K562 (cell line): ENCODE measurements at regions of chr15 and their contacts with region 1.

Region 1: DNA sequence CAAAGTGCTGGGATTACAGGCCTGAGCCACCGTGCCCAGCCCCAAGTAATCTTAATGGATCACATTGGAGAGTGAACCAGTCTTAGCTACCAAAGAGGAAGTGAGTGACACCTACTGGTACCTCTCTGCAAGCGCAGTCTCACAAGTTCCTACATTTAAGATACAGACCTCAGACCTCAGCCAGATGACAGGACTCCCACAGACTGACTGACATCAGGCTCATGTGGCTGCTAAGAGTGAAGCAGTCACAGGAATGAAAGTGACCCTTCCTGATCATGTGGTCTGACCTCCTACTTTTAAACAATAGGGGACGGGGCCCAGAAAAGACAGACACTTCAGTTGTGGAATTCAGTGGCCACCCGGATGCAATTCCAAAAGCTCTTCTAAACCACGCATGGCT is 36.3 kb upstream of the GNB5 start:
- DNase-seq: peak; percentile 63 to 79 (median 68)
- ATAC-seq: peak; percentile 98
- H3K4me3 ChIP-seq: no peak overlapping the region
- H3K27ac ChIP-seq: no peak overlapping the region
- H3K4me1 ChIP-seq: no peaks in the 10 kb centered on the region; a peak in 2 of 5 replicates
- H3K27me3 ChIP-seq: peaks cover 14 to 30% of the 10 kb centered on the region in 2 experiments; a peak in 4 of 5 replicates
- CTCF ChIP-seq: peak; percentile 66 to 82 (median 79)
- EP300 ChIP-seq: no peak
- POLR2A ChIP-seq: no peak
- RAD21 ChIP-seq: peak; percentile 49 to 71

Region 2: DNA sequence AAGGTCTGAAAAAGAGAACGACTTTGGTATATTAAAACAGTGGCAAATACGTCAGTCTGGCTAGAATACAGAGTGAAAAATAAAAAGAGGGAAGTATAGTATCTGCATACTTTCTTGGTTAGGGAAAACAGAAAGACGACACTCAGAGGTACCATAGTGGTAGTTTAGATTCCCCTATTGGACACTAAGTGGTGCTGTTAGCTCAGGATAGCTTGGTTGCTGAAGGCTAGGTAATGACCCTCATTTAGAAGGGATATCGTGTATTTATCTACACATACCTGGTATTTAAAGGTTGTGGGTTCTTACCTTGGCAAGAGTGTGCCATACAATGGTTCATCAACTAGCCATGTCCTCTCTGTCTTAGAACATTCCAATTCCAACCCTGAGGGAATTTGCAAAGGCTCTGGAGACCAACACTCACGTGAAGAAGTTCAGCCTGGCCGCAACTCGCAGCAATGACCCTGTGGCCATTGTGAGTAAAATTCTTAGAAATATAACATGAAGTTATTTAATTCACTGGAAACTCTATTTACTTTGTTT is 445.0 kb before region 1 on chr15:
- CTCF ChIA-PET with region 1: interaction called, 3 read pairs
- POLR2A ChIA-PET with region 1: no interaction called
- in situ Hi-C with region 1: no loop called
- intact Hi-C with region 1: loop called (anchors 5 kb)
- DNase-seq: peak; percentile 41 to 52 (median 45)
- ATAC-seq: peak; percentile 82
- H3K4me3 ChIP-seq: no peak overlapping the region
- H3K27ac ChIP-seq: no peak overlapping the region
- H3K4me1 ChIP-seq: no peaks in the 10 kb centered on the region
- H3K27me3 ChIP-seq: no peaks in the 10 kb centered on the region
- CTCF ChIP-seq: peak; percentile 63 to 75 (median 68)
- EP300 ChIP-seq: no peak
- POLR2A ChIP-seq: no peak
- RAD21 ChIP-seq: peak; percentile 39 to 79; a peak in 3 of 4 replicates

Region 3: GRCh38 chr15:52163321-52164190 is 63.9 kb before region 1 on chr15:
- CTCF ChIA-PET with region 1: no interaction called
- POLR2A ChIA-PET with region 1: no interaction called
- in situ Hi-C with region 1: no loop called
- intact Hi-C with region 1: loop called (anchors 5 kb)
- DNase-seq: peak in 3 of 4 experiments; percentile 31 to 52 (median 37)
- ATAC-seq: peak; percentile 93
- H3K4me3 ChIP-seq: no peak overlapping the region
- H3K27ac ChIP-seq: no peak overlapping the region
- H3K4me1 ChIP-seq: peaks cover 0 to 6% of the 10 kb centered on the region in 2 experiments; a peak in 1 of 5 replicates
- H3K27me3 ChIP-seq: peaks cover 32 to 34% of the 10 kb centered on the region in 2 experiments
- CTCF ChIP-seq: peak; percentile 44 to 65 (median 44); a peak in 5 of 6 replicates
- EP300 ChIP-seq: no peak
- POLR2A ChIP-seq: no peak
- RAD21 ChIP-seq: peak; percentile 14 to 38; a peak in 3 of 4 replicates

Region 4: GRCh38 chr15:52183562-52184173 is 43.8 kb before region 1 on chr15:
- CTCF ChIA-PET with region 1: no interaction called
- POLR2A ChIA-PET with region 1: interaction called, 3 read pairs
- in situ Hi-C with region 1: no loop called
- intact Hi-C with region 1: loop called (anchors 1 kb)
- DNase-seq: peak; percentile 33 to 51 (median 42)
- ATAC-seq: peak; percentile 45; the same call in 2 of the 3 replicates
- H3K4me3 ChIP-seq: no peak overlapping the region
- H3K27ac ChIP-seq: no peak overlapping the region
- H3K4me1 ChIP-seq: peaks cover 2 to 15% of the 10 kb centered on the region in 2 experiments; a peak in 3 of 5 replicates
- H3K27me3 ChIP-seq: peaks cover 20 to 38% of the 10 kb centered on the region in 2 experiments
- CTCF ChIP-seq: peak; percentile 70 to 71 (median 70)
- EP300 ChIP-seq: no peak
- POLR2A ChIP-seq: no peak
- RAD21 ChIP-seq: peak in 1 of 2 experiments; percentile 58; a peak in 2 of 4 replicates

Region 5: GRCh38 chr15:52306277-52306676 is 78.8 kb after region 1 on chr15:
- CTCF ChIA-PET with region 1: no interaction called
- POLR2A ChIA-PET with region 1: no interaction called
- in situ Hi-C with region 1: no loop called
- intact Hi-C with region 1: no loop called
- DNase-seq: no peak
- ATAC-seq: no peak
- H3K4me3 ChIP-seq: no peak overlapping the region
- H3K27ac ChIP-seq: no peak overlapping the region
- H3K4me1 ChIP-seq: no peaks in the 10 kb centered on the region
- H3K27me3 ChIP-seq: peaks cover 3 to 16% of the 10 kb centered on the region in 2 experiments; a peak in 4 of 5 replicates
- CTCF ChIP-seq: no peak
- EP300 ChIP-seq: no peak
- POLR2A ChIP-seq: no peak
- RAD21 ChIP-seq: no peak